ENCODE measurements at regions of chr5 and their contacts with region 1.

Region 1: DNA sequence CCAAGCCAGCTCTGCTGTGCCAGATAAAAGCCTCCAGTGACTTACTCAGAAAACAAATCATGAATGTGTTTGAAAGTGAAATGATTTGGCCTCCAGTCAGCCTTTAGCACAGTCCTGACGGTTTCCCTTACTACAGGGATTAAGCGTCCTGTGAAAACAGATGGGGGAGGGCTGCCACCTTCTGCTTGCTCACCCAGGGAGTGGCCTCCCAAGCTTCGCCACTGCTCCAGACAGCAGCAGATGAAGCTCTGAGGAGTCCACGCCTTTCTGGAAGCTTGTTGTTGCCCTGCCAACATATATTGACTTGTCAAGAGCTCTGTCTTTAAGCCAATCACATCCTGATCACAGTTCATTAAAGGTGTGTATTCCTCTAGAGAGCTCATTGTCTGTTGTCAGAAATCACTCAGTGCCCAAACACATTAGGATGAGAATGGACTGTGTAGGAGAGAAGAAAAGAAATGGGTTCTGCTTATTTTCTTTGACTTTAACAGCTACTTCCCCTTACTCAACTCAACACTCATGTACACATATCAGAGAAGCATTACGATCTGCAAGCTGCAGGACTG is 4.9 kb upstream of the FYB1 start:
- DNase-seq: peak in 3 of 7 donors; percentile 18 to 54 (median 29)
- H3K4me3 ChIP-seq: no peak overlapping the region
- H3K27ac ChIP-seq: peak overlapping the region in 1 of 5 donors; percentile 25
- H3K4me1 ChIP-seq: no peaks in the 10 kb centered on the region
- H3K27me3 ChIP-seq: no peaks in the 10 kb centered on the region
- CTCF ChIP-seq: no peak
- POLR2A ChIP-seq: no peak

Region 2: DNA sequence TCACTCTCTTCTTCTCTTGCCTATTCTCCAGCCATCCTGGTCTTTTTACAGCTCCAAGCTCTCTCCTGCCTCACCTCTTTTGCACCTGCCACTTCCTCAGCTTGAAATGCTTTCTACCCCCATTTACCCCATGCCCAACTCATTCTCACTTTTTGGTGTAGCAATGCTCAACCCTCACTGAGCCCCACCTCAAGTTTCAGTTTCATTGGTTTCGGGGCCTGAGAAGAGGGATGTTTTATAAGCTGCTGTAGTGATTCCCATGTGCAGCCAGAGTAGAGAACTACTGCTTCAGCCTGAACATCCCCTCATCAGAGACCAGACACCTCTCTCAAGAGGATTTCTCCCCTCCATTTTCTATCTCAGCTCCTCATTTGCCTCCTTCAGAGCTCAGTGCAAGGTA is 40.2 kb after region 1 on chr5:
- intact Hi-C with region 1: no loop called
- DNase-seq: no peak
- H3K4me3 ChIP-seq: no peak overlapping the region
- H3K27ac ChIP-seq: no peak overlapping the region
- H3K4me1 ChIP-seq: no peaks in the 10 kb centered on the region
- H3K27me3 ChIP-seq: no peaks in the 10 kb centered on the region
- CTCF ChIP-seq: no peak
- POLR2A ChIP-seq: no peak

Region 3: DNA sequence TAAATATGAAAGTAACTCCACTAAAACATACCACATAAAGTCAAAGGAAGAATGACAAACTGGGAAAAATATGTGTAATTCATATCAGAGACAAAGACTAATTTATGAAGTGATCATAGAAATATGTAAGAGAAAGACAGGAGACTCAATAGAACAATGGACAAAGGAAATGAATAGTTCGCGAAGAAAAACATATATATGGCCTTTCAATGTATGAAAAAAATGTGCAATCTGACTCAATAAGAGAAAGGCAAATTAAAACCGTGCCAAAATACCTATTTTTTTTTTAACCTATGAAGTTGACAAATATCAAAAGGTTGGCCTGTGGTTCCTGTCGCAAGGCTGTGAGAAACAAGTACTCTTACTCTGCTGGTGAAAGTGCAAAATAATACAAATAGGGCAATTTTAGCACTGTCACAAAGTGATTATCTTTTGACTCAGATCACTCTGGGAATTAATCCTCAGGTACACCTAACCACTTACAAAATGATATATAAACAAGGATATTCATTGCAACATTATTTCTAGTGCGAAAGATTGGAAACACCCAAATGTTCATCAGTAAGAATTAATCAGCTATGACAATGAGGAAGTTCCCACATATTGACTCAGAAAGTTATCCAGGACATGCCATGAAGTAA is 136.3 kb after region 1 on chr5:
- intact Hi-C with region 1: loop called in 1 of 2 experiments (anchors 10 kb)
- DNase-seq: no peak
- H3K4me3 ChIP-seq: no peak overlapping the region
- H3K27ac ChIP-seq: no peak overlapping the region
- H3K4me1 ChIP-seq: no peaks in the 10 kb centered on the region
- H3K27me3 ChIP-seq: no peaks in the 10 kb centered on the region
- CTCF ChIP-seq: no peak
- POLR2A ChIP-seq: no peak

Region 4: GRCh38 chr5:39554159-39554558 is 329.9 kb after region 1 on chr5:
- intact Hi-C with region 1: loop called in 1 of 2 experiments (anchors 5 kb)
- DNase-seq: no peak
- H3K4me3 ChIP-seq: no peak overlapping the region
- H3K27ac ChIP-seq: no peak overlapping the region
- H3K4me1 ChIP-seq: no peaks in the 10 kb centered on the region
- H3K27me3 ChIP-seq: no peaks in the 10 kb centered on the region
- CTCF ChIP-seq: no peak
- POLR2A ChIP-seq: no peak